ENCODE measurements at regions of chr3 and their contacts with region 1.

Region 1: DNA sequence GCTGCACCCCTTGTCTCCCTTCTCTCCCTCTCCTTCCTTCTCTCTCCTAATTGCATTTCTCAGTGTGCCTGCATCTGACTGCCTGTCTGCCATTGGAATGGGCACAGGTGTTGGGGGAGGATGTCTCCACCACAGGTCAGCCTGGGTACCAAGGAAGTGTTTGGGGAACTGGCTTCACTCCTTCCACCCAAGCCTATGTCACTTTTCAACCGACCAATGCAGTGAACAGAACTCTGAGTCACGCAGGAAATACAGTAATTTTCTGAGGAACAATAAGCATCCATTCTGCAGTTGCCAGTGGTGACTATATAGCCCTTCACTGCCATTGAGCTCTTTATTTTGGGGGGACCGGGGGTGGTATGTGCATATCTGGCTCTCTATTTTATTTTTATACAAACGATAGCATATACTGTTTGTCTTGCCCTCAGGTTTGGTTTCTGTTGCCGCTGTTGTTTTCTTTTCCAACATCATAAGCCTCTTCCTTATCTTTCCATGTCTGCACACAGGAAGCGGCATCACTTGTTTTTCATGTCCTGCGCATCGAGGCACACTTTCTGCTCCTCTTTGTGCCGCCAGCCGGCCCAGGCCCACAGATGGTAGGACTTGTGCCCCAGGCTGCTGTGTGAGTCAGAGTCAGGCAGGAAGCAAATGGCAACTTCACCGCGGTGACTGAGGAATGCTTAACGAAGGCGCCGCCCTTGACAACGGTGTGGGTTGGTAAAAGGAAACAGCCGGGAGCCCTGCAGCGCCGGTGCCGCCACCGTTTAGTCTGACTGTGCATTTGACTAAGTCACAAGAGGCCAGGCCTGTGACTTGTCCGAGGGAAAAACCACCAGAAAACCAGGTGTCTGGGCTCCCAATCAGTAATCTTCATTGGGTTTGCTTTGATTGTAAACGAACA is 21.1 kb upstream of the CDCP1 start:
- DNase-seq: peak; percentile 97 to 99 (median 98)
- H3K4me3 ChIP-seq: peak overlapping the region in 2 of 3 experiments; percentile 5 to 38
- H3K4me3 Mint-ChIP-seq: peak overlapping the region; percentile 67 to 84
- H3K27ac ChIP-seq: peak overlapping the region; percentile 92 to 99
- H3K27ac Mint-ChIP-seq: peak overlapping the region; percentile 98 to 100 (median 100)
- H3K4me1 ChIP-seq: peaks cover 47 to 69% of the 10 kb centered on the region in 2 donors
- H3K4me1 Mint-ChIP-seq: peaks cover 70% of the 10 kb centered on the region
- H3K27me3 ChIP-seq: no peaks in the 10 kb centered on the region
- H3K27me3 Mint-ChIP-seq: peaks cover 0 to 3% (median 1%) of the 10 kb centered on the region in 3 donors
- CTCF ChIP-seq: no peak

Region 2: DNA sequence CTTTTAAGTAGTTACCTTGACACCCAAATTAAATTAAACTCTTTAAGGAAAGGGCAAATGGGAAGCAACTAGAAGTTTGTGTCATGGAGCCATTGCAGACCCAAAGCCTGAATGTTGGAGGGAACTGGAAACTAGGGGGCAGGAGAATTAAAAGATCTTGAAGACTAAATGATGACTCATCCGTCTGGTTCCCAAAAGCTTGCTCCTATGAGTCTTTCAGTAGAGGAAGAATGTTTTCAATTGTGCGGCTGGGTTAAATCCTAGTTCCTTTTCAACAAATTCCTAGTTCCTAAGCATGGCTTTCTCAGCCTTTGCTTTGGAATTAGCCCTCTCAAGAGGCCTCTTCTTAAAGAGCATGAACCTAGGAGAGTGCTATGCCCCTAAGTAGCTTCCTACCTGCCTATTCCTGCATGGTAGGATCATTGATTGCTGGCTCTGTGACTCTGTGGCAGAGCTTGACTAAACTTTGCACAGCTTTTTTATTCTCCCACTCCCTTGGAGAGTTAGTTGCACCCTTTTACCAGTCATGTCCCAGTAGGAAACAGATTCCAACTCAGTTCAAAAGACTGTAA is 123.4 kb before region 1 on chr3:
- intact Hi-C with region 1: loop called in 1 of 2 experiments (anchors 5 kb)
- DNase-seq: peak; percentile 63 to 95 (median 89)
- H3K4me3 ChIP-seq: no peak overlapping the region
- H3K4me3 Mint-ChIP-seq: no peak overlapping the region
- H3K27ac ChIP-seq: peak overlapping the region in 1 of 2 donors; percentile 42
- H3K27ac Mint-ChIP-seq: peak overlapping the region; percentile 68 to 93 (median 83)
- H3K4me1 ChIP-seq: peaks cover 19 to 42% of the 10 kb centered on the region in 2 donors
- H3K4me1 Mint-ChIP-seq: peaks cover 41% of the 10 kb centered on the region
- H3K27me3 ChIP-seq: no peaks in the 10 kb centered on the region
- H3K27me3 Mint-ChIP-seq: peaks cover 0 to 6% (median 3%) of the 10 kb centered on the region in 3 donors
- CTCF ChIP-seq: no peak

Region 3: DNA sequence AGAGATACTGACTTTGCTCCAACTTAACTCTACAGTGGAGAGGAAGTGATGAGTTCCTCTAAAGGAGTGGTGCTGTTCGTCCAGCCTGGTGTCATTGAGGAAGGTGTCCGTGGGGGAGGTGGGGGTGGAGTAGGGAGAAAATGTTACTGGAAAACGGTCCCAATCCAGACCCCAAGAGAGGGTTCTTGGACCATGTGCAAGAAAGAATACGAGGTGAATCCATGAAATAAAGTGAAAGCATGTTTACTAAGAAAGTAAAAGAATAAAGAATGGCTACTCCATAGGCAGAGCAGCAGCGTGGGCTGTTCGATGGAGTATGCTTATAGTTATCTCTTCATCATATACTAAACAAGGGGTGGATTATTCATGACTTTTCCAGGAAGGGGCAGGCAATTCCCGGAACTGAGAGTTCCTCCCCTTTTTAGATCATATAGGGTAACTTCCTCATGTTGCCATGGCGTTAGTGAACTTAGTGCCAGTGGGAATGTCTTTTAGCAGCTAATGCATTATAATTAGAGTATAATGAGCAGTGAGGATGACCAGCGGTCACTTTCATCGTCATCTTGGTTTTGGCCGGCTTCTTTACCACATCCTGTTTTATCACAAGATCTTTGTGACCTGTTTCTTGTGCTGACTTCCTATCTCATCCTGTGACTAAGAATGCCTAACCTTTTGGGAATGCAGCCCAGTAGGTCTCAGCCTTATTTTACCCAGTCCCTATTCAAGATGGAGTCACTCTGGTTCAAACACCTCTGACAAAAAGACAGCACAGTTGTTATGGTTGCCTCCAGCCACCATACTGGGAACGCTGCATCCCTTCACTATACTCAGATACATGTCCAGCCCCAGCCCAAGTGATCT is 102.5 kb before region 1 on chr3:
- intact Hi-C with region 1: loop called in 1 of 2 experiments (anchors 2 kb)
- DNase-seq: peak; percentile 87 to 97 (median 95)
- H3K4me3 ChIP-seq: peak overlapping the region; percentile 3 to 62 (median 23)
- H3K4me3 Mint-ChIP-seq: peak overlapping the region; percentile 74 to 88
- H3K27ac ChIP-seq: peak overlapping the region; percentile 90 to 96
- H3K27ac Mint-ChIP-seq: peak overlapping the region; percentile 98 to 100 (median 99)
- H3K4me1 ChIP-seq: peaks cover 34 to 43% of the 10 kb centered on the region in 2 donors
- H3K4me1 Mint-ChIP-seq: peaks cover 44% of the 10 kb centered on the region
- H3K27me3 ChIP-seq: no peaks in the 10 kb centered on the region
- H3K27me3 Mint-ChIP-seq: peaks cover 0 to 2% (median 0%) of the 10 kb centered on the region in 3 donors
- CTCF ChIP-seq: no peak

Region 4: GRCh38 chr3:45123030-45123429 is 44.2 kb before region 1 on chr3:
- intact Hi-C with region 1: loop called in 1 of 2 experiments (anchors 1 kb)
- DNase-seq: peak; percentile 67 to 84 (median 83)
- H3K4me3 ChIP-seq: no peak overlapping the region
- H3K4me3 Mint-ChIP-seq: no peak overlapping the region
- H3K27ac ChIP-seq: peak overlapping the region in 1 of 2 donors; percentile 73
- H3K27ac Mint-ChIP-seq: peak overlapping the region in 6 of 7 donors; percentile 47 to 87 (median 80)
- H3K4me1 ChIP-seq: peaks cover 11 to 38% of the 10 kb centered on the region in 2 donors
- H3K4me1 Mint-ChIP-seq: peaks cover 47% of the 10 kb centered on the region
- H3K27me3 ChIP-seq: no peaks in the 10 kb centered on the region
- H3K27me3 Mint-ChIP-seq: peaks cover 0 to 3% (median 1%) of the 10 kb centered on the region in 3 donors
- CTCF ChIP-seq: no peak

Region 5: DNA sequence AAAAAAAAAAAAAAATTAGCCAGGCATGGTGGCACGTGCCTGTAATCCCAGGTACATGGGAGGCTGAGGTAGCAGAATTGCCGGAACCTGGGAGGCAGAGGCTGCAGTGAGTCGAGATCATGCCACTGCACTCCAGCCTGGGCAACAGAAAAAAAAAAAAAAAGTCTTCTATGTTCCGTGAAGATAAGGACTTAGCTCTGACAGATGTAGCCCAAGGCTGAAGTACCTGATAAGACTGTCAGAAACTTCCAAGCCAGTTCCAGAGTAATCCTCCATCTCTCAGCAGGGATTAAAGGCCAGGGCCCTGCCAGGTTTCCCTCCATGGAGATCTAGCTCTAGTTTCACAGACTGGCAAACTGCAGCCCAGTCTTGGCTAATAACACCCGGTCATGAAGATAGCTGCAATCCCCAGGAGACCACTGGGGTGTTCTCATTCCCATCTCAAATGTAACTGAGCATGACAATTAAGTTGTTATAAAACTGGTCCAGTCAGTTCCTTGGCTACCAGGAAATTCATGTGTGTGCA is 29.5 kb before region 1 on chr3:
- intact Hi-C with region 1: loop called in 1 of 2 experiments (anchors 5 kb)
- DNase-seq: no peak
- H3K4me3 ChIP-seq: no peak overlapping the region
- H3K4me3 Mint-ChIP-seq: no peak overlapping the region
- H3K27ac ChIP-seq: no peak overlapping the region
- H3K27ac Mint-ChIP-seq: peak overlapping the region in 2 of 7 donors; percentile 4 to 48
- H3K4me1 ChIP-seq: peaks cover 21 to 30% of the 10 kb centered on the region in 2 donors
- H3K4me1 Mint-ChIP-seq: peaks cover 44% of the 10 kb centered on the region
- H3K27me3 ChIP-seq: no peaks in the 10 kb centered on the region
- H3K27me3 Mint-ChIP-seq: peaks cover 0 to 8% (median 0%) of the 10 kb centered on the region in 3 donors
- CTCF ChIP-seq: no peak

Region 6: GRCh38 chr3:45205126-45205525 is 37.9 kb after region 1 on chr3:
- intact Hi-C with region 1: loop called in 1 of 2 experiments (anchors 5 kb)
- DNase-seq: peak; percentile 30 to 50 (median 34)
- H3K4me3 ChIP-seq: no peak overlapping the region
- H3K4me3 Mint-ChIP-seq: no peak overlapping the region
- H3K27ac ChIP-seq: no peak overlapping the region
- H3K27ac Mint-ChIP-seq: peak overlapping the region in 1 of 7 donors; percentile 50
- H3K4me1 ChIP-seq: peaks cover 0 to 3% of the 10 kb centered on the region in 2 donors
- H3K4me1 Mint-ChIP-seq: peaks cover 9% of the 10 kb centered on the region
- H3K27me3 ChIP-seq: no peaks in the 10 kb centered on the region
- H3K27me3 Mint-ChIP-seq: peaks cover 0 to 4% (median 2%) of the 10 kb centered on the region in 3 donors
- CTCF ChIP-seq: no peak

Region 7: GRCh38 chr3:46406788-46407611 is 1239.7 kb after region 1 on chr3 and contains the starts of genes CCR5AS and CCRL2:
- intact Hi-C with region 1: loop called in 1 of 2 experiments (anchors 5 kb)
- DNase-seq: peak; percentile 91 to 98 (median 94)
- H3K4me3 ChIP-seq: peak within 1 kb of the TSS; percentile 34 to 74 (median 55)
- H3K4me3 Mint-ChIP-seq: peak within 1 kb of the TSS; percentile 81 to 95
- H3K27ac ChIP-seq: peak within 1 kb of the TSS; percentile 97 to 100
- H3K27ac Mint-ChIP-seq: peak within 1 kb of the TSS; percentile 100
- H3K4me1 ChIP-seq: peaks cover 43 to 47% of the 10 kb centered on the region in 2 donors
- H3K4me1 Mint-ChIP-seq: peaks cover 58% of the 10 kb centered on the region
- H3K27me3 ChIP-seq: no peaks in the 10 kb centered on the region
- H3K27me3 Mint-ChIP-seq: peaks cover 0 to 7% (median 0%) of the 10 kb centered on the region in 3 donors
- CTCF ChIP-seq: no peak
- polyA plus RNA-seq, gene CCRL2: 10.2 to 15.3 (median 11.7) TPM

Measured in CD14-positive monocyte (primary cell).